SK-N-SH (cell line): ENCODE measurements at regions of chr2 and their contacts with region 1.

Region 1: DNA sequence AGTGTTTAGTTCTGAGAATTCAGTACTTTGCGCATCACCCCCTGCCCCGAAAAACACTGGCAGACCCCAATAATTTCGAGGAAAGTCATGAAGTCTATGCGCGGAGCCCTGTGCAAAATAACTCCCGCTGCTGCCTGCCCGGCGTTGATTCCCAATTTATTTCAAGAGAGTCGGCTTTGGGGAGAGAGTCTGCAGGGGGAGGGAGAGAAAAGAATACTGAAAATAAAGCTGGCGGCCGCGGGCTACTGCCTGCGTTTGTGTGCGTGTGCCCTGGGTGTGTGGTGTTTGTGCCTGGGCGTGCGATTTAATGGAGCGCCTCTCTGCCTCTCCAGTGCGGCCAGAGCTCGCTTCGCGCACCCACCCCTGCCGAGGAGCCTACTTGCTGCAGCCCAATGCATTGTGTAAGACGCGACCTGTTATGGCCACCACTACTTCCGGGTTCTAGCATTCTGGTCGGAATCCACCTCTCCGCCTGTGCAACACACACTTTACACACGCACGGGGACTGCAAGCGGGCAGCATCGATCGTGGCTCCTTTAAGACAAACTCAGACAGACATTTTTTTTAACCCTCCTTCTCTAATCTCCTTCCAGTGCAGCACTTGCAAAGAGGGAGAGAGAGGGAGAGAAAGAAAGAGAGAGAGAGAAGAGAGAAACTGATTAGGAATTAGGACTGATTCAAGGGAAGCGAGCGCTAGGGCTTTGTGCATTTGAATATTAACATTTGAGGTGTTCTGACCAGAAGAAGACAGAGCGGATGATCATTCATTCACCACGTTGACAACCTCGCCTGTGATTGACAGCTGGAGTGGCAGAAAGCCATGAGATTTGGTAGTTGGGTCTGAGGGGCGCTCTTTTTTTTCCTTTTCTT is at the start of gene MEIS1:
- DNase-seq: peak; percentile 88
- H3K4me3 ChIP-seq: peak within 1 kb of the TSS; percentile 85 to 90
- H3K27ac ChIP-seq: peak within 1 kb of the TSS; percentile 76 to 81
- H3K4me1 ChIP-seq: peaks cover 0 to 20% of the 10 kb centered on the region in 2 experiments; a peak in 2 of 4 replicates
- H3K27me3 ChIP-seq: no peaks in the 10 kb centered on the region
- CTCF ChIP-seq: peak; percentile 11; the same call in 1 of the 2 replicates
- EP300 ChIP-seq: peak in 1 of 2 experiments; percentile 5; a peak in 1 of 4 replicates
- RAD21 ChIP-seq: peak; percentile 22
- polyA plus RNA-seq, gene MEIS1: 16.9 and 21.8 TPM in 2 replicates

Region 2: DNA sequence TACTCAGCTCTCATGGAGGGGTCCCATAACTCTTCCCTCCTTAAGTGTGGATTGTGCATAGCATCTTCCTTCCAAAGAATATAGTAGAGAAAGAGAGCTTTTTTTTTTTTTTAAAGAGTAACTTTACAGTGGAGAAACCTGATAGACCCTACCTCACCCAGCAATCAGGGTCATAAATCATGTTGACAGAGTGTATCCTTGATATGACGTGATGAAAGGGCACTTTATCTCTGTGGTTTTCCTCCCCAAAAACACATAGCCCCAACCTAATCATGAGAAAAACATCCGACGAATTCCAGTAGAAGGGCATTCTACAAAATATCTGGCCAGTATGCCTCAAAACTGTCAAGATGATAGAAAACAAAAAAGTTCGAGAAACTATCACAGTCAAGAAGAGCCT is 29.4 kb before region 1 on chr2:
- CTCF ChIA-PET with region 1: no interaction called
- POLR2A ChIA-PET with region 1: no interaction called
- DNase-seq: no peak
- H3K4me3 ChIP-seq: no peak overlapping the region
- H3K27ac ChIP-seq: no peak overlapping the region
- H3K4me1 ChIP-seq: no peaks in the 10 kb centered on the region
- H3K27me3 ChIP-seq: no peaks in the 10 kb centered on the region
- CTCF ChIP-seq: no peak
- EP300 ChIP-seq: no peak
- RAD21 ChIP-seq: no peak

Region 3: DNA sequence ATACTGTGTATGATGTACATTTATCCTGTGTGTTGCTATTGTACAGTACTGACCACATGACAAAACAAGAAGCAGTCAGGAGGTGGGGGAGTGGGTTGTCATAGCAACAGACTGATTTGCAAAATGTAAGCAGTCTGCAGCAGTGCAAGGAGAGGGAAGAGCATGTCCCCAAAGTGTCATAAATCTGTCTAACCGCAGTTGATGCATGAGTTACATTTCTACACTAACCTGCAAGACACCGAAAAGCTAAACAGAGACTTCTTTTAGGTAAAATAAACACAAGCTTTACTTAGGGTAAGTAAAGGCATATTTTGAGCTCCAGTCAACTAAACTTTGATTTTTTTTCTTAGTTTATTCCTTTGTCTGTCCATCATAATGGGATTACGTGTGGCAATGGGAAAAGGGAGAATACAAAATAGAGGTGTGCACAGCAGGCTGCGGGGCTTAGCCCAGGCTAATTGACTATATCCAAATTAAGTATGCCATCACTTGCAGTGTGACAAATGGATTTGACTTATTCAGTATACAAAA is 134.5 kb after region 1 on chr2:
- CTCF ChIA-PET with region 1: interaction called, 35 read pairs
- POLR2A ChIA-PET with region 1: interaction called, 27 read pairs
- DNase-seq: no peak
- H3K4me3 ChIP-seq: no peak overlapping the region
- H3K27ac ChIP-seq: no peak overlapping the region
- H3K4me1 ChIP-seq: peaks cover 25 to 29% of the 10 kb centered on the region in 2 experiments; a peak in 3 of 4 replicates
- H3K27me3 ChIP-seq: no peaks in the 10 kb centered on the region
- CTCF ChIP-seq: no peak
- EP300 ChIP-seq: no peak
- RAD21 ChIP-seq: no peak

Region 4: DNA sequence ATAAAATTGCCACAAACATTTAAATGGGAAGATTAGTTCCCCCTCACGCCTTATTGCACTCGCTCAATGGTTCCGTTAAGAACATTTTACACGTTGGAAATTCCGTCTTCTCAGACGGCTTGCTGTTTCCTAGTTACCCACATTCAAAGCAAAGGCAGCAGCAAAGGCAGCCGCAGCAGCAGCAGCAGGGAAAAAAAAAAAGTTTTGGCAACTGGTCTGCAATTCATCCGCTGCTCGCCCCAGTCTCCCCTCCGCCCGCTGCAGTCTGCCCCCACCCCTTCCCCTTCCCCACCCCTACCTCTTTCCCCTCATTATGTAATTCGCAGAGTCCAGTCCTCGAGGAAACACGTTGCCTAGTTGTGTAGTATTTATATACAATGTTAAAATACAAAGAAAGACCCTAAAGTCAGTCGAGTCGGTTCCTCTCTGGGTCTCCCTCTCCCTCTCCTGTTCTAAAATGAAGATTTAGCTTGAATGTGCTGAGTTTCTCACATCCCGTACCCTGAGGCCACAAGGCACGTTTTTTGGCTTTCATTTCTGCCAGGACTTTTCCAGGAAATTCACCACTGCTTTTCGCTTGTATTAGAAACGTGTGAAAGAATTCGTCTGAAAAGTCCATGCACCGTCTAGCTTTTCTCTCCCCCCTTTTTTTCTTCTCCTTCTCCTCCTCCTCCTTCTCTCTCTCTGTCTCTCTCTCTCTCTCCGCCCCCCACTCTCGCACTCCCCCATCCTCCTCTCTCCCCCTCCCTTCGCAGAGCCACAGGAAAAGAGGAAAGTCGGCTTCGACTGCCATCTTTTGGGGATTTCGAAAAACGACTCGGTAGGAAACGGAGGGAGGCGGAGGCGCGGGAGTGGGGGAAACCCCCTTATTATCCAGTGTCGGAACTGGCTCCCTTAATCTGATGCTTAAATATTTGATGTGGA is 140.0 kb after region 1 on chr2:
- CTCF ChIA-PET with region 1: interaction called, 35 read pairs
- POLR2A ChIA-PET with region 1: interaction called, 27 read pairs
- DNase-seq: peak; percentile 91
- H3K4me3 ChIP-seq: peak overlapping the region; percentile 53 to 73
- H3K27ac ChIP-seq: peak overlapping the region; percentile 93 to 98
- H3K4me1 ChIP-seq: peaks cover 5 to 18% of the 10 kb centered on the region in 2 experiments; a peak in 3 of 4 replicates
- H3K27me3 ChIP-seq: no peaks in the 10 kb centered on the region
- CTCF ChIP-seq: peak; percentile 68
- EP300 ChIP-seq: peak in 1 of 2 experiments; percentile 32; a peak in 2 of 4 replicates
- RAD21 ChIP-seq: peak; percentile 82

Region 5: GRCh38 chr2:67215214-67216055 is 780.5 kb after region 1 on chr2:
- CTCF ChIA-PET with region 1: interaction called, 15 read pairs
- POLR2A ChIA-PET with region 1: interaction called, 10 read pairs
- DNase-seq: peak; percentile 69
- H3K4me3 ChIP-seq: no peak overlapping the region; a peak in 1 of 4 replicates
- H3K27ac ChIP-seq: peak overlapping the region in 1 of 2 experiments; percentile 53; a peak in 2 of 4 replicates
- H3K4me1 ChIP-seq: peaks cover 0 to 18% of the 10 kb centered on the region in 2 experiments; a peak in 2 of 4 replicates
- H3K27me3 ChIP-seq: no peaks in the 10 kb centered on the region
- CTCF ChIP-seq: peak; percentile 71
- EP300 ChIP-seq: no peak
- RAD21 ChIP-seq: peak; percentile 97

Region 6: DNA sequence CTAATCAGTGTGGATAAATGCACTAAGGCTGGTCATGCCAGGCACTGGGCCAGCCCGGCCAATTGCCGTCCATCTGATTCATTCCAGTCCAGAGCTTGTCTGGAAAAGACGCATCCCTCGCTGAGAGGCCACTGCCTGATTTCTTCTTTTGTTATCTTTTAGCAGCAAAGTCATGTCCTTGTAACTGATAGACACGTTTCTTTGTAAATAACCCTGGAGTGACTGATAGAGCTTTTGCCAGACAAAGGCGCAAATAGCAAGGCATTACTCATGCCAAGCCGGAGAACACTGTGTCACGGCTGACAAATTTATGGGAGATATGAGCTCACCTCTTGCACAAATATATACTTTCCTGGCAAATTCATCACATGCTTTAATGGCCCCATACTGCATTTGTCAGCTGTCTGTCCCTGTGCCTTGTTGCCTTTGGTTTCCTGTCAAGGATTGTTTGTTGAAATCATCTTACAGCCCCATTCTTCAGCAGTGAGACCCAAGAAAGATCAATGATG is 1126.6 kb after region 1 on chr2:
- CTCF ChIA-PET with region 1: no interaction called
- POLR2A ChIA-PET with region 1: interaction called, 16 read pairs
- DNase-seq: peak; percentile 69
- H3K4me3 ChIP-seq: peak overlapping the region in 1 of 2 experiments; percentile 6; a peak in 2 of 4 replicates
- H3K27ac ChIP-seq: peak overlapping the region; percentile 79 to 98
- H3K4me1 ChIP-seq: peaks cover 13 to 20% of the 10 kb centered on the region in 2 experiments
- H3K27me3 ChIP-seq: no peaks in the 10 kb centered on the region
- CTCF ChIP-seq: no peak
- EP300 ChIP-seq: peak; percentile 55 to 99
- RAD21 ChIP-seq: peak; percentile 55